Motor neuron (in vitro differentiated cells): ENCODE measurements at regions of chr1 and their contacts with region 1.

Region 1: GRCh38 chr1:67853704-67854103 is 20.4 kb upstream of the GNG12 start:
- ATAC-seq: peak; percentile 74 to 96 (median 82)
- H3K4me3 ChIP-seq: no peak overlapping the region
- H3K27ac ChIP-seq: no peak overlapping the region
- H3K4me1 ChIP-seq: peaks cover 25 to 26% of the 10 kb centered on the region in 2 donors

Region 2: DNA sequence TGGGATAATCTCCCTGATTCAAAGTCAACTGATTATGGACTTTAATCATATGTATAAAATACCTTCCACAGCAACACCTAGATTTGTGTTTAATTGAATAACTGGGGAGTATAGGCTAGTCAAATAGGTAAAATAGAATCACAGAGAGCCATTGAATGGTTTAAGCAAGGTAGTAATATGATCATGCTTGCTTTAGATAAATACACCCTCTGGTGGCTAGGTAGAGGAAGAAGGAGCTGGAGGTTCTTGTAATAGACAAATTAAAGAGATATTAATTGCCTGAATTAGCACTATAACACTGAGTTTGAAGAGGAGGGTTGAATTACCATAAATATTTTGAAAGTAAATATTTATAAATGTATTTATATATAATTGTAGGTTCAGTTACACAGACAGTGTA is 156.4 kb after region 1 on chr1:
- in situ Hi-C with region 1: loop called in 1 of 9 experiments (anchors 25 kb)
- ATAC-seq: no peak
- H3K4me3 ChIP-seq: no peak overlapping the region
- H3K27ac ChIP-seq: no peak overlapping the region
- H3K4me1 ChIP-seq: peaks cover 0 to 8% of the 10 kb centered on the region in 2 donors

Region 3: GRCh38 chr1:68103884-68104554 is 250.3 kb after region 1 on chr1:
- in situ Hi-C with region 1: loop called in 5 of 9 experiments (anchors 5 to 25 kb)
- ATAC-seq: peak; percentile 62 to 97 (median 94)
- H3K4me3 ChIP-seq: no peak overlapping the region
- H3K27ac ChIP-seq: no peak overlapping the region
- H3K4me1 ChIP-seq: peaks cover 0 to 17% of the 10 kb centered on the region in 2 donors

Region 4: GRCh38 chr1:68346188-68346808 is 492.6 kb after region 1 on chr1:
- in situ Hi-C with region 1: loop called in 3 of 9 experiments (anchors 10 to 25 kb)
- ATAC-seq: peak in 1 of 8 experiments; percentile 27
- H3K4me3 ChIP-seq: no peak overlapping the region
- H3K27ac ChIP-seq: no peak overlapping the region
- H3K4me1 ChIP-seq: no peaks in the 10 kb centered on the region

Region 5: GRCh38 chr1:68409426-68409825 is 555.7 kb after region 1 on chr1:
- in situ Hi-C with region 1: no loop called
- ATAC-seq: peak in 1 of 8 experiments; percentile 41
- H3K4me3 ChIP-seq: no peak overlapping the region
- H3K27ac ChIP-seq: no peak overlapping the region
- H3K4me1 ChIP-seq: peaks cover 6 to 10% of the 10 kb centered on the region in 2 donors